Thyroid gland (tissue), 4 donors: ENCODE measurements at regions of chr18 and their contacts with region 1.

Region 1: DNA sequence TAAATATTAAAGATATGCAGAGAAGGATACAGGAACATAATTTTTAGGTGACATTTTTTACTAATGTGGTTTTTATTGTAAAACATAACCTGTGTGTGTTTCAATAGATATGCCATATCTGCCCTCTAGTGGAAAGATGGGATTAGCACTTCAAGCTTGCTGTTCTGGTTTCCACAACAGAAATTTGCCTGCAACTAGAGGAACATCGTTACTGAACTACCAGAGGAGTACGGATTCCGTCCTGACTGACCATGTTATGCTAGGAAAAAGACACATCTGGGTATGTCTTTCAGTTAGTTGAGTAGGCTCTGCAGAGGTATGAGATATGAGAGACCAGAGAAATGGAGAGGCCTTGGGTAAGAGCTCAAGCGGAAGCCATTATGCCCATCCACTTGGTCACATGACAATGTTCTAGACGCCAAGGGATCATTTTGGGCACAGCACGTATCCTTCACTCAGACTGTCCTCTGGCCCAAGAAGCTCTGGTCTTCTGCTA is 104.9 kb downstream of the MBD2 start:
- DNase-seq: no peak
- H3K4me3 ChIP-seq: no peak overlapping the region
- H3K27ac ChIP-seq: no peak overlapping the region
- H3K4me1 ChIP-seq: peaks cover 3 to 5% of the 10 kb centered on the region in 2 donors
- H3K27me3 ChIP-seq: no peaks in the 10 kb centered on the region
- CTCF ChIP-seq: peak; percentile 39 to 76 (median 58)
- POLR2A ChIP-seq: no peak

Region 2: DNA sequence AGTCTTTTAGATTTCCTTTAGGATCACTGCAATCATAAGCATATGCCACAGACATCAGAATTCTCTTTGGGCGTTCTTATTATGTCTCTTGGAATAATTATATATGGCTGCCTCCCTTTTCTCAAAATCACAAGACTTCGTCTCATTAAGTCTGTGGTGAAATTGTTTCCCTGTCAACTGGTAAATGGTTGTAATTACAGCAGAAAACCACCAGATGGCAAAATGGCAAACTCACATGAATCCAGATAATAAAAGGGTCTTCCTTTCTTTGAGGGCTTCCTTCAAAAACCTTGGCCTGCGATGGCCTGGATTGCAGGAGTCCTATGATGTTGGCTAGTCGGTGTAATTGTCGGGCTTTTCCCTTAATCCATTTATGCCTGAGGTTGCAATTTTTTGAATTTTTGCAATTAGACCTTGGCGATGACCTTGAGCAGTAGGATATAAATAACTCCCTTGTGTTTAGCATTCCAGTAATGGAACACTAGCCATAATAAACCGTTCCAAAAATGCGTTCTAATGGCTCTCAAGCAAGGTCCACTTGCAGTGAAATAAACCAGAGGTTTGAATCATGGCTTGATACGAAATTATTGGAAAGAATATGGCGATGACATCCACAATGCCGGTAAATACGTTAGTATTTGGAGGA is 551.5 kb before region 1 on chr18:
- intact Hi-C with region 1: loop called (anchors 10 kb)
- DNase-seq: no peak
- H3K4me3 ChIP-seq: no peak overlapping the region
- H3K27ac ChIP-seq: no peak overlapping the region
- H3K4me1 ChIP-seq: no peaks in the 10 kb centered on the region
- H3K27me3 ChIP-seq: no peaks in the 10 kb centered on the region
- CTCF ChIP-seq: peak in 4 of 6 experiments; percentile 24 to 55 (median 30)
- POLR2A ChIP-seq: no peak